A549 (cell line): ENCODE measurements at regions of chr2 and their contacts with region 1.

Region 1: DNA sequence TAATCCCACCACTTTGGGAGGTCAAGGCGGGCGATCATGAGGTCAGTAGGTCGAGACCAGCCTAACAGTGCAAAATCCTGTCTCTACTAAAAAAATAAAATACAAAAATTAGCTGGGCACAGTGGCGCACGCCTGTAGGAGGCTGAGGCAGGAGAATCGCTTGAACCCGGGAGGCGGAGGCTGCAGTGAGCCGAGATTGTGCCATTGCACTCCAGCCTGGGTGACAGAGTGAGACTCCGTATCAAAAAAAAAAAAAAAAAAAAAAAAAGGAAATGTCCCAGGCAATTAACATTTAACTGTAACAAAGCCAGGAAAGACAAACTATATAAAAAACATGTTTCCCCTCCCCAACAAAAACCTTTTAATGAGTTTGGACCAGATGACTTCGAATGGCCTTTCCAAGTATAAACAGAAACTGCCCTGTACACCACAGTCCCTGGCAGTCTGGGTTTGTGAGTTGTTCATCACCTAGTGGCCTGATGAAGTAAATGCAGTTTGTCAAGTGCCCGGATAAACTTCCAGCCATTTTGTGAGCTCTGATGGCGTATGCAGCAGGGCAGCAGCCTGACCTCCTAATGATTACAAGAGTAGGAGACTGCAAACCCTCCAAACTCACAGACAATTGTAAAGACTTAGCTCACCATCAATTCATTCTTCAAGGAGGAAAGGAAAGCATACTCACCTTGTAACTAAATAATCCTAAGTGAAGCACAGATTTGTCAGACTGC is 16.6 kb upstream of the PCBP1 start:
- DNase-seq: peak; percentile 92 to 97
- ATAC-seq: peak; percentile 99 to 100
- H3K4me3 ChIP-seq: no peak overlapping the region
- H3K27ac ChIP-seq: peak overlapping the region; percentile 8 to 54; a peak in 4 of 6 replicates
- H3K4me1 ChIP-seq: 0 out of 3 replicates have a peak, but pooled peaks cover 3% of the 10 kb centered on the region
- CTCF ChIP-seq: peak; percentile 79
- EP300 ChIP-seq: no peak
- POLR2A ChIP-seq: no peak
- RAD21 ChIP-seq: peak; percentile 80 to 87

Region 2: DNA sequence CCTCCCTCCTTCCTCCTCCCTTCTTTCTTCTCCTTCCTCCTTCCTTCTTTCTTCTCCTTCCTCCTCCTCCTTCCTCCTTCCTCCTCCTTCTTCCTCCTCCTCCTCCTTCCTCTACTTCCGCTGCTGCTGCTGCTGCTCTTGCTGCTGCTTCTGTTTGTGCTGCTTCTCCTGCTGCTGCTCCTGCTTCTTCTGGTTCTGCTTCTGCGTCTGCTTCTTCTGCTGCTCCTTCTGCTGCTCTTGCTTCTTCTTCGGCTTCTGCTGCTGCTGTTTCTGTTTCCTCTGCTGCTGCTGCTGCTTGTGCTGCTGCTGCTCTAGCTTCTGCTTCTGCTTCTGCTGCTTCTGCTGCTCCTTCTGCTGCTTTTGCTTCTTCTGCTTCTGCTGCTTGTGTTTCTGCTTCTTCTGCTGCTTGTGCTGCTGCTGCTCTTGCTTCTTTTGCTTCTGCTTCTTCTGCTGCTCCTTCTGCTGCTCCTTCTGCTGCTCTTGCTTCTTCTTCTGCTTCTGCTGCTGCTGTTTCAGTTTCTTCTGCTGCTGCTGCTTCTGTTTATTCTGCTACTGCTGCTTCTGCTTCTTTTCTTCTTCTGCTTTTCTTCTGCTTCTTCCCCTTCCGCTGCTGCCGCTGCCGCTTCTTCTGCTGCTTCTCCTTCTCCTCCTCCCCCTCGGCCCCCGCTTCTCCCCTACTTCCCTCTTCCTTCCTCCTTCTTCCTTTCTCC is 168.3 kb before region 1 on chr2:
- CTCF ChIA-PET with region 1: interaction called, 14 read pairs
- POLR2A ChIA-PET with region 1: no interaction called
- DNase-seq: no peak
- ATAC-seq: no peak
- H3K4me3 ChIP-seq: no peak overlapping the region
- H3K27ac ChIP-seq: no peak overlapping the region
- H3K4me1 ChIP-seq: no peaks in the 10 kb centered on the region
- CTCF ChIP-seq: no peak
- EP300 ChIP-seq: no peak
- POLR2A ChIP-seq: no peak
- RAD21 ChIP-seq: no peak

Region 3: GRCh38 chr2:70043252-70043875 is 27.3 kb before region 1 on chr2:
- CTCF ChIA-PET with region 1: interaction called, 15 read pairs
- POLR2A ChIA-PET with region 1: no interaction called
- DNase-seq: no peak
- ATAC-seq: no peak
- H3K4me3 ChIP-seq: no peak overlapping the region
- H3K27ac ChIP-seq: no peak overlapping the region
- H3K4me1 ChIP-seq: no peaks in the 10 kb centered on the region
- CTCF ChIP-seq: no peak
- EP300 ChIP-seq: no peak
- POLR2A ChIP-seq: no peak
- RAD21 ChIP-seq: no peak

Region 4: DNA sequence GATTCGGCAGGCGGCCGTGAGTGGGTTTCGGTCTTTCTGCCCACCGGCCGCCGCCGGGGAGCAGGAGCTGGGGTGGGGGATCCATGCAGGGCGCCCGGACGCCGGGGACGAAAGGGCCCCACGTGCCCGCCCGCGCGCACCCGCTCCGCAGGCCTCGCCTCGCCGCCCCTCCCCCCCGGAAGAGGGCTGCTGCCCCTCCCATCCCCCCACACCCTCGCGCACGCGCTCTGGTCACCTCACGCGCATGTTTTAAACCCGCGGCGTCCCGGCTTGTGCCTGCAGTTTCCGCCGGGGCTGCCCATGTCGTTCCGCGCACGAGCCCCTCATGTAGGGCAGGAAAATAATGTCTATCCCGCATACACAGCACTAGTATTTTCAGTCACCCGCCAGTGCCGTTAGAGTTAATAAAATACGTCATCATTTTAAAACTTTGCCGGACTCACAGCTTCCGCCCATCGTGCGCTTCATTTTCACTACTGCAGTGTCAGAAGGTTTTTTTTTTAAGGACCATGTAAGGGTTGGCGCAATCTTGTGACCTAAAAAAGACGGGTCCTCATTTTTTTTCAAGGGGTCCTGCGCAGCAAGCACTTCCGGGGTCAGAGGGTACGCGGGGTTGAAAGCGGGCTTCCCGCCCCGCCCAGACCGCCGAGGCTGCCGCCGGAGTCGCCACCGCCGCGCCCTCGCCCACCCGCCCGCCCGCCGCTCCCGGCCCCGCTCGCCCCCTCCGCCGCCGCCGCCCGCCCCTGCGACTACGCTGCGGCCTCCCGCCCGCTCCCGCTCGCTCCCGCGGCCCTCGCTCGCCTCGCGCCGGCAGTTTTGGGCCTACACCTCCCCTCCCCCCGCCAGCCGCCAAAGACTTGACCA is 16.4 kb after region 1 on chr2 and contains the start of gene PCBP1:
- CTCF ChIA-PET with region 1: interaction called, 17 read pairs
- POLR2A ChIA-PET with region 1: no interaction called
- DNase-seq: peak; percentile 96 to 97
- ATAC-seq: peak; percentile 62 to 64
- H3K4me3 ChIP-seq: peak within 1 kb of the TSS; percentile 96
- H3K27ac ChIP-seq: peak within 1 kb of the TSS; percentile 96 to 100
- H3K4me1 ChIP-seq: peaks cover 30% of the 10 kb centered on the region
- CTCF ChIP-seq: no peak
- EP300 ChIP-seq: peak in 1 of 2 experiments; percentile 48; a peak in 1 of 5 replicates
- POLR2A ChIP-seq: peak; percentile 57
- RAD21 ChIP-seq: peak in 1 of 2 experiments; percentile 0; a peak in 1 of 5 replicates
- polyA plus RNA-seq, gene PCBP1: 86.8 and 134 TPM in 2 replicates